Mammary epithelial cell (primary cell): ENCODE measurements at regions of chr10 and their contacts with region 1.

Region 1: GRCh38 chr10:77029777-77030717 is 607.6 kb downstream of the KCNMA1 start:
- DNase-seq: no peak
- H3K4me3 ChIP-seq: no peak overlapping the region
- H3K27ac ChIP-seq: no peak overlapping the region
- H3K4me1 ChIP-seq: peaks cover 8% of the 10 kb centered on the region
- H3K27me3 ChIP-seq: no peaks in the 10 kb centered on the region
- CTCF ChIP-seq: no peak

Region 2: DNA sequence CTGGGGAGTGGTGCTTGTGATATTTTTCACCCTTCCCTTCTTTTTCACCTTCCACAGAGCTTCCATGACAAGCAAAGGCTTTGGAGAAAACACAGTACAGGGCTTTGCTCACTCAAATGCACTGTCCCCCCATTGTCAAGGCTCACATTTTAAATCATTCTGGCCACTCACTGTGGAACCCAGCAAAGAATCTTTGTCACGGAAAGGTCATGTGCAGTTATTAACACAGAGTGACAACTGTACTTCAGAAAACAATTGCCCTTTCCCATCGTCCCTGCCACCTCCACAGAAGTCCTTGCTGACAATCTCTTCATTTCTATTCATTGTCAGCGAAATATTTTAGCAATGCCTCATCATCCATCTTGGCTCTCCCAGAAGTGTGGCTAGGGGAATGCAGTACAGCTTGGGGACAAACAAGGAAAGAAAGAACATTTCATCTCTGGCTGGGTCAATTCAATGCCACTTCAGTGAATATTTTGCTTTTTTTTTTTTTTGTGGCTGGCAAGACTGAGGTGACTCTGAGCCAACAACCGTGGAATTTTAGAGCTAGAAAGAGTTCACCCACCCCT is 243.5 kb before region 1 on chr10:
- CTCF ChIA-PET with region 1: no interaction called
- dilution Hi-C with region 1: no loop called
- in situ Hi-C with region 1: no loop called
- intact Hi-C with region 1: no loop called
- DNase-seq: no peak
- H3K4me3 ChIP-seq: no peak overlapping the region
- H3K27ac ChIP-seq: no peak overlapping the region
- H3K4me1 ChIP-seq: no peaks in the 10 kb centered on the region
- H3K27me3 ChIP-seq: no peaks in the 10 kb centered on the region
- CTCF ChIP-seq: no peak

Region 3: GRCh38 chr10:76922666-76923065 is 107.4 kb before region 1 on chr10:
- CTCF ChIA-PET with region 1: no interaction called
- dilution Hi-C with region 1: no loop called
- in situ Hi-C with region 1: no loop called
- intact Hi-C with region 1: no loop called
- DNase-seq: no peak
- H3K4me3 ChIP-seq: no peak overlapping the region
- H3K27ac ChIP-seq: no peak overlapping the region
- H3K4me1 ChIP-seq: no peaks in the 10 kb centered on the region
- H3K27me3 ChIP-seq: no peaks in the 10 kb centered on the region
- CTCF ChIP-seq: no peak

Region 4: DNA sequence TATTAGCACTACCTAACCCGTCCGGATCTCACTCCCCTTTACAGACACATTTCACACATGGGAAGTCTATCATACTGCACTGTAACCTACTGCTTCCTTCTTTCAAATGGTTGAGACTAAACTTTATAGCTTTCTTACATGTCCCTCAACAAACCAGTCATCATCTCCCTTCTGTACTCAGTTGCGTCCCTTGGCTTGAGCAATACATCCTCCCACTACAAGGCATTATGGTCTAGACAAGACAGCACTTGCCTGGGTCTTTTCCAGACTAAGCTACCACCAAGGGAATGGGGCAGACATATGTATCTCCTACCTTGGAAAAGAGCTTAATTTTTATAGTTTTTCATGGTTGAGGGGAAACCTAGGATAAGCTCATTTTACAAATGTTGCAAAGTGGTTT is 32.3 kb after region 1 on chr10:
- CTCF ChIA-PET with region 1: no interaction called
- dilution Hi-C with region 1: no loop called
- in situ Hi-C with region 1: no loop called
- intact Hi-C with region 1: no loop called
- DNase-seq: peak; percentile 76
- H3K4me3 ChIP-seq: no peak overlapping the region
- H3K27ac ChIP-seq: no peak overlapping the region
- H3K4me1 ChIP-seq: peaks cover 8% of the 10 kb centered on the region
- H3K27me3 ChIP-seq: no peaks in the 10 kb centered on the region
- CTCF ChIP-seq: no peak

Region 5: GRCh38 chr10:77097625-77098024 is 67.6 kb after region 1 on chr10:
- CTCF ChIA-PET with region 1: no interaction called
- dilution Hi-C with region 1: loop called (anchors 5 kb)
- in situ Hi-C with region 1: no loop called
- intact Hi-C with region 1: no loop called
- DNase-seq: no peak
- H3K4me3 ChIP-seq: no peak overlapping the region
- H3K27ac ChIP-seq: no peak overlapping the region
- H3K4me1 ChIP-seq: no peaks in the 10 kb centered on the region
- H3K27me3 ChIP-seq: no peaks in the 10 kb centered on the region
- CTCF ChIP-seq: no peak